ENCODE measurements at regions of chr7 and their contacts with region 1.

Region 1: GRCh38 chr7:82481499-82482097 is 38.0 kb upstream of the CACNA2D1 start:
- DNase-seq: no peak
- H3K4me3 ChIP-seq: no peak overlapping the region
- H3K27ac ChIP-seq: no peak overlapping the region
- H3K4me1 ChIP-seq: no peaks in the 10 kb centered on the region
- H3K27me3 ChIP-seq: no peaks in the 10 kb centered on the region
- CTCF ChIP-seq: peak; percentile 83

Region 2: GRCh38 chr7:82044497-82045080 is 437.0 kb before region 1 on chr7:
- intact Hi-C with region 1: loop called (anchors 10 kb)
- DNase-seq: no peak
- H3K4me3 ChIP-seq: no peak overlapping the region
- H3K27ac ChIP-seq: no peak overlapping the region
- H3K4me1 ChIP-seq: peaks cover 16% of the 10 kb centered on the region
- H3K27me3 ChIP-seq: no peaks in the 10 kb centered on the region
- CTCF ChIP-seq: peak; percentile 80

Region 3: DNA sequence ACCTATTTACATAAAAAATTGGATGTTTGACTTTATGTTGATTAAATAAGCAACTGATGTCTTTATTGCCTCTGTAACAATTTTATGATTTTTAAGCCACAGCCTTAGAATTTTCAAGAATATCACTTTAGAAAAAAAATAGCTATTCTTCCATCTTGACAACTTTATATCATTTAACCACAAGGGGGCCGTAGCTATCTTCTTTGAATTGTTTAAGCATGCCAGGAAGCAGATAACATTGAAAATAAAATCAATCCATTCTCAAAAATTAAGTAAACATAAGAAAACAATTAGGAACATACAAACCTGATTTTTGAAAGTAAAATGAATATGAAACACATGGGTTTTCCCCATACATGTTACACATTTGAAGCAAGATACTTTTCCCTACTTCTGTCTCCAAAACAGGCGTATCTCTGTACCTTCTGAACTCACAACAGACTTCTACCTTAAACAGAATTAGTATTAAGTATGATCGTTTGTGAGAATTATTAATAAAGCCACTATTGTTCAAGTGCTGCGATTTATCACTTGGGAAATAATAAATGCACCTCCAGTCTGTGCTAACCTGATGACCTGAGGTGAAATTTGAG is 247.0 kb before region 1 on chr7:
- intact Hi-C with region 1: loop called (anchors 10 kb)
- DNase-seq: no peak
- H3K4me3 ChIP-seq: no peak overlapping the region
- H3K27ac ChIP-seq: no peak overlapping the region
- H3K4me1 ChIP-seq: peaks cover 14% of the 10 kb centered on the region
- H3K27me3 ChIP-seq: no peaks in the 10 kb centered on the region
- CTCF ChIP-seq: peak; percentile 72

Region 4: DNA sequence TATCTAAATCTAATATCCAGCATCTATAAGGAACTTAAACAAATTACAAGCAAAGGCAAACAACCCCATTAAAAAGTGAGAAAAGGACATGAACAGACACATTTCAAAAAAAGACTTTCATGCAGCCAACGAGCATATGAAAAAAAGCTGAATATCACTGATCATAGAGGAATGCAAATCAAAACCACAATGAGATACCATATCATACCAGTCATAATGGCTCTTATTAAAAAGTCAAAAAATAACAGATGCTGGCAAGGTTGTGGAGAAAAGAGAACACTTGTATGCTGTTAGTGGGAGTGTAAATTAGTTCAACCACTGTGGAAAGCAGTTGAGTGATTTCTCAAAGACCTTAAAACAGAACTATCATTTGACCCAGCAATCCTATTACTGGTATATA is 296.4 kb after region 1 on chr7:
- intact Hi-C with region 1: no loop called
- DNase-seq: no peak
- H3K4me3 ChIP-seq: no peak overlapping the region
- H3K27ac ChIP-seq: no peak overlapping the region
- H3K4me1 ChIP-seq: no peaks in the 10 kb centered on the region
- H3K27me3 ChIP-seq: no peaks in the 10 kb centered on the region
- CTCF ChIP-seq: no peak

Measured in left ventricle myocardium inferior (tissue), 1 donor.